ENCODE measurements at regions of chr3 and their contacts with region 1.

Region 1: GRCh38 chr3:12484198-12484974 is at the start of gene TSEN2:
- DNase-seq: peak; percentile 99
- ATAC-seq: peak; percentile 95
- H3K4me3 Mint-ChIP-seq: peak within 1 kb of the TSS; percentile 96
- H3K27ac Mint-ChIP-seq: peak within 1 kb of the TSS; percentile 92
- H3K4me1 Mint-ChIP-seq: peaks cover 26% of the 10 kb centered on the region
- H3K27me3 Mint-ChIP-seq: no peaks in the 10 kb centered on the region
- CTCF ChIP-seq: no peak
- total RNA-seq, gene TSEN2: 15.9 and 17.4 TPM in 2 replicates

Region 2: GRCh38 chr3:11379233-11379823 is 1105.1 kb before region 1 on chr3:
- CTCF ChIA-PET with region 1: no interaction called
- POLR2A ChIA-PET with region 1: no interaction called
- intact Hi-C with region 1: loop called (anchors 5 kb)
- DNase-seq: no peak
- ATAC-seq: peak; percentile 21
- H3K4me3 Mint-ChIP-seq: no peak overlapping the region
- H3K27ac Mint-ChIP-seq: no peak overlapping the region
- H3K4me1 Mint-ChIP-seq: no peaks in the 10 kb centered on the region
- H3K27me3 Mint-ChIP-seq: no peaks in the 10 kb centered on the region
- CTCF ChIP-seq: no peak

Region 3: DNA sequence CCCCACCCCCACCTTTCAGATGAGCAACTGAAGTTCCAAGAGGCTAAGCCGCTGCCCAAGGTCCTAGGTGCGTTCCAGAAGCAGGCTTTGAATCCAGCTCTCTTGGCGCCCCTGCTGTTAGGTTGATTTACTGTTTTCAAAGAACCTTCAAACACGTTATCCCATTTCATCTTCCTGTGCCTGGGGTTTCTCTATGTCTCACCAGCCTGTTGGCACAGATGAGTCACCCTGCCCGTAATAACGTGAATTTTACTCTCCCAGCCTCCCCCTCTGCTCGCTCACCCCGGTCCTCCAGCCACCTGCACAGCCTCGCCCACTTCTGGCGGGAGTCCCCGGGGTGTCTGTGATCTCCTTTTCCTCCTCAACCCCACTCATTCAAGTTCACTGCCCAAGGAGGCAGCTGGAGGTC is 13.1 kb before region 1 on chr3:
- CTCF ChIA-PET with region 1: interaction called, 10 read pairs
- POLR2A ChIA-PET with region 1: interaction called, 3 read pairs
- intact Hi-C with region 1: no loop called
- DNase-seq: no peak
- ATAC-seq: peak; percentile 64
- H3K4me3 Mint-ChIP-seq: no peak overlapping the region
- H3K27ac Mint-ChIP-seq: no peak overlapping the region
- H3K4me1 Mint-ChIP-seq: peaks cover 3% of the 10 kb centered on the region
- H3K27me3 Mint-ChIP-seq: peaks cover 2% of the 10 kb centered on the region
- CTCF ChIP-seq: no peak

Region 4: DNA sequence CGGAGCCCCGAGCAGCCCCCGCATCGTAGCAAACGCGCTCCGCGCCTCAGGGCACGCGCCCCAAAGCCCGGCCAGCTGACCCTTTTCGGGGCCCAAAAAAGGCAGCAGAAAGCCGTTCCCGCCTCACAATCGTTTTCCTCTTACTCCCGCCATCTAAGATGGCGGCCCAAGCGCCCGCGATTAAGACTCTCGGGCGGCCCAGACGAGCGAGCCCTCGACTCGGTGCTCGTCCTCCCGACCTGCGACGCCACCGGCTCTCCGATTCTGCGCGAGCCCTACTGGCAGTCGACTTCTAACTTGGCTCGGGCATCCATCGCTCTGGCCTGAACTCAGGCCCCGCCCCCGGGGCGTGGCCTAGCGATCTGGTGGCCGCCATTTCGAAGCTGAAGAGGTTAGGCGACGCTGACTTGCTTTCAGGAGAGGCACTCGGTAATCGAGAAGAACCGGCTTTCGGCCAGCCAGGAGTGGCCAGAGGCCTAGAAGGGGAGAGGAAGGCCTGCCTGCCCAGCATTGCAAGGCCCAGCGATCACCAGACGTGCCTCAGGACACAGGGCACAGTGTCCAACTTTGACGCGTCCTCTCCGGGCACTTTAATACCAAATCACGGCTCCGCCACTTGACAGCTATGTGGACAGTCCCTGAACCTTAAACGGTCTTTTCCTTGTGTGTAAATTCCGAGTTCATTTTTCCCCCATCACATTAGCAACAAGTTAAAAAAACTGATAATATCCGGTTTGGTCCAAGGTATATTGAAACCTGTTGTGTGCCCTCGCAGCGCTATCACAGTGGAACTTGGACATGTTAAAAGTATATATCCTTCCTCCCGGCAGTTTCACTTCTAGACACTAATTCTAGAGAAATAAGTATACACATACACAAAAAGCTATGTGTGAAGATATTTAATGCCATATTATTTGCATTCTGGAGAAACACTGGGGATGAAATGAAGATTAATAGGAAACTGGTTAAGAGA is 179.8 kb after region 1 on chr3 and contains the start of gene RAF1:
- CTCF ChIA-PET with region 1: interaction called, 4 read pairs
- POLR2A ChIA-PET with region 1: interaction called, 10 read pairs
- intact Hi-C with region 1: loop called (anchors 1 kb)
- DNase-seq: peak; percentile 96
- ATAC-seq: peak; percentile 94
- H3K4me3 Mint-ChIP-seq: peak within 1 kb of the TSS; percentile 98
- H3K27ac Mint-ChIP-seq: peak within 1 kb of the TSS; percentile 98
- H3K4me1 Mint-ChIP-seq: peaks cover 37% of the 10 kb centered on the region
- H3K27me3 Mint-ChIP-seq: no peaks in the 10 kb centered on the region
- CTCF ChIP-seq: no peak
- total RNA-seq, gene RAF1: 89.9 and 103 TPM in 2 replicates

Region 5: GRCh38 chr3:12810013-12810780 is 325.8 kb after region 1 on chr3:
- CTCF ChIA-PET with region 1: no interaction called
- POLR2A ChIA-PET with region 1: no interaction called
- intact Hi-C with region 1: loop called (anchors 10 kb)
- DNase-seq: peak; percentile 93
- ATAC-seq: peak; percentile 100
- H3K4me3 Mint-ChIP-seq: peak overlapping the region; percentile 69
- H3K27ac Mint-ChIP-seq: peak overlapping the region; percentile 50
- H3K4me1 Mint-ChIP-seq: peaks cover 9% of the 10 kb centered on the region
- H3K27me3 Mint-ChIP-seq: no peaks in the 10 kb centered on the region
- CTCF ChIP-seq: no peak

Region 6: GRCh38 chr3:12891985-12892839 is 407.8 kb after region 1 on chr3:
- CTCF ChIA-PET with region 1: no interaction called
- POLR2A ChIA-PET with region 1: no interaction called
- intact Hi-C with region 1: loop called (anchors 1 kb)
- DNase-seq: no peak
- ATAC-seq: peak; percentile 52
- H3K4me3 Mint-ChIP-seq: no peak overlapping the region
- H3K27ac Mint-ChIP-seq: no peak overlapping the region
- H3K4me1 Mint-ChIP-seq: peaks cover 15% of the 10 kb centered on the region
- H3K27me3 Mint-ChIP-seq: peaks cover 3% of the 10 kb centered on the region
- CTCF ChIP-seq: peak; percentile 89

Region 7: GRCh38 chr3:14178247-14179113 is 1694.1 kb after region 1 on chr3 and contains the starts of genes LSM3 and XPC:
- CTCF ChIA-PET with region 1: no interaction called
- POLR2A ChIA-PET with region 1: no interaction called
- intact Hi-C with region 1: loop called (anchors 5 kb)
- DNase-seq: peak; percentile 98
- ATAC-seq: peak; percentile 96
- H3K4me3 Mint-ChIP-seq: peak within 1 kb of the TSS; percentile 97
- H3K27ac Mint-ChIP-seq: peak within 1 kb of the TSS; percentile 98
- H3K4me1 Mint-ChIP-seq: peaks cover 63% of the 10 kb centered on the region
- H3K27me3 Mint-ChIP-seq: no peaks in the 10 kb centered on the region
- CTCF ChIP-seq: no peak
- total RNA-seq, gene LSM3: 12.9 and 14.2 TPM in 2 replicates
- total RNA-seq, gene XPC: 35.4 and 35.6 TPM in 2 replicates

Measured in activated B cell treated with CpG ODN at 0.5 μM for 24 hours (primary cell).